WTC11 (cell line): ENCODE measurements at regions of chr7 and their contacts with region 1.

Region 1: DNA sequence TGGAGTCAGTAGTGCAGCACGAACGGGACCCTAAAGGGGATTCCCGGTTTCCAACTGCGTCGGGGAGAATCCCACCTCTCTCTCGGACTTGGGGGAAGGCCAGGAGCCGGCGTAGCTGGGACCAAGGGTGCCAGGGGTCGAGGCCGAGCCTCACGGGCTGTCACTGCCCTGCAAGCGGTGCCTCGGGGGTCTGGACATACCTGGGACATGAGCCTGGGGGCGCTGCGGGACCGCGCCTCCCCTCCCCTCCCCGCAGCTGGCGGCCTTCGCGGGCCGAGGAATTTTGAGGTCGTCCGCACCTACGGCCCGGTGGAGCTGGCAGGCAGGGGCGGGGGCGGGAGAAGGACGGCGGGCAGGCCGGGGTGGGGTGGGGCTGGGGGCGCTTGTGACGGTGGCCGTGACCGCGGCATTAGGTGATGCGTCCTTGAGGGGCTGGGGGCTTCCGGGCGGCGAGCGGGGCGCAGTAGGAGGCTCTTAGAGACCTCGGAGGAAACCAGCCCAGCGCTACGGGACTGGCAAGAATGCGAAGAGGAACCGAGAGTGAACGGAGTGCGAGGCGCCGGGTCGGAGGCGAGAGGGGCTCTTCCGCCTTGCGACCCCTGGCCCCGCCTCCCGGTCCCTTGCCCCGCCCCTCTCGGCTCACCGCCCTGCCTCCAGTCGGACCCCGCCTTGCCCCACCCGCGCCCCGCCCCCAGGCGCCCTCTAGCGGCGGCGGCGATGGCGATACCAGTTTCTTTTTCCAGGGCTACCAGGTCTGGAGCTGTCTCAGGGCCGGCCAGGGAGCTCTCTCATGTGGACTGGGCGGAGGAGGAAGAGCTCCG is 48.3 kb downstream of the NPVF start:
- DNase-seq: peak; percentile 99
- ATAC-seq: peak; percentile 96
- H3K4me3 Mint-ChIP-seq: peak overlapping the region; percentile 80
- H3K27ac Mint-ChIP-seq: no peak overlapping the region
- H3K4me1 Mint-ChIP-seq: peaks cover 24% of the 10 kb centered on the region
- H3K27me3 Mint-ChIP-seq: peaks cover 20% of the 10 kb centered on the region
- CTCF ChIP-seq: peak; percentile 80

Region 2: GRCh38 chr7:25125137-25125946 is 54.6 kb before region 1 on chr7 and contains the start of gene CYCS:
- CTCF ChIA-PET with region 1: interaction called, 13 read pairs
- POLR2A ChIA-PET with region 1: interaction called, 11 read pairs
- DNase-seq: peak; percentile 99
- ATAC-seq: peak; percentile 97
- H3K4me3 Mint-ChIP-seq: peak within 1 kb of the TSS; percentile 94
- H3K27ac Mint-ChIP-seq: peak within 1 kb of the TSS; percentile 99
- H3K4me1 Mint-ChIP-seq: peaks cover 10% of the 10 kb centered on the region
- H3K27me3 Mint-ChIP-seq: peaks cover 26% of the 10 kb centered on the region
- CTCF ChIP-seq: no peak
- total RNA-seq, gene CYCS: 215 to 249 TPM (median 217 TPM) in 3 replicates

Region 3: DNA sequence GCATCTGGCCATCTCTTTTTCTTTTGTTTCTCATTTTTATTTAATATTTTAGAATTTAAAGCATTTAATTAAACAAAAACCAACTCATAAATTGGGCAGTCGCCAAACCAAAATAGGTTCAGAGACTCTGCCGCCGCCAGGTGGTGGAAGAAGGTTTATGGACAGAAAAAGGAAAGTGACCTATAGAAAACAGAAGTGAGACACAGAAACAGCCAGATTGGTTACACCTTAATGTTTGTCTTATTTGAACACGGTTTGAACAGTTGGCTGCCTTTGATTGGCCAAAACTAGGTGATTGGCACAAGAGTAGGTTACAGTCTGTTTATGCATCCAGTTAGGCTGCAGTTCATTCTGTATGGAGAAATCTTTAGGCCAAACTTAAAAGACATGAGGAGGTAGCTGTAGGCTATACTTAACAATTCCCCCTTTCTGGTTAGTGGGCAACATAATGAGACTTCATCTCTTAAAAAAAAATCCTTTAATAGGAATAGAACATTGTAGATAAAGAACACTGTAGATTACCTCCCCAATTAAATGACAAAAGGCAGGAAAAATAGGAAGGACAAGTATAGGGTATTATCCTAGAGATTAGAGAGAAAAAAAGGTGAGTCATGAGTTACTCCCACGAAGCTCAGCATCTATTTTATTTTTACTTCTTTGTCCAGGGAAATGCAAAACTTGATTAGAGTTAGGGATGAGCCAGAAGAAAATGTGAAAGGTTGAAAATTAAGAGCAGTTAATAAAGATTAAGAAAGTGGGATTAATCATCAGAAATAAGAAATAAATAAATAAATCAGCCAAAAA is 31.0 kb before region 1 on chr7:
- CTCF ChIA-PET with region 1: interaction called, 12 read pairs
- POLR2A ChIA-PET with region 1: no interaction called
- DNase-seq: no peak
- ATAC-seq: no peak
- H3K4me3 Mint-ChIP-seq: no peak overlapping the region
- H3K27ac Mint-ChIP-seq: peak overlapping the region; percentile 15
- H3K4me1 Mint-ChIP-seq: peaks cover 18% of the 10 kb centered on the region
- H3K27me3 Mint-ChIP-seq: no peaks in the 10 kb centered on the region
- CTCF ChIP-seq: no peak

Region 4: GRCh38 chr7:25244254-25245033 is 64.5 kb after region 1 on chr7:
- CTCF ChIA-PET with region 1: interaction called, 12 read pairs
- POLR2A ChIA-PET with region 1: no interaction called
- DNase-seq: no peak
- ATAC-seq: peak; percentile 78
- H3K4me3 Mint-ChIP-seq: no peak overlapping the region
- H3K27ac Mint-ChIP-seq: no peak overlapping the region
- H3K4me1 Mint-ChIP-seq: peaks cover 11% of the 10 kb centered on the region
- H3K27me3 Mint-ChIP-seq: peaks cover 95% of the 10 kb centered on the region
- CTCF ChIP-seq: no peak

Region 5: DNA sequence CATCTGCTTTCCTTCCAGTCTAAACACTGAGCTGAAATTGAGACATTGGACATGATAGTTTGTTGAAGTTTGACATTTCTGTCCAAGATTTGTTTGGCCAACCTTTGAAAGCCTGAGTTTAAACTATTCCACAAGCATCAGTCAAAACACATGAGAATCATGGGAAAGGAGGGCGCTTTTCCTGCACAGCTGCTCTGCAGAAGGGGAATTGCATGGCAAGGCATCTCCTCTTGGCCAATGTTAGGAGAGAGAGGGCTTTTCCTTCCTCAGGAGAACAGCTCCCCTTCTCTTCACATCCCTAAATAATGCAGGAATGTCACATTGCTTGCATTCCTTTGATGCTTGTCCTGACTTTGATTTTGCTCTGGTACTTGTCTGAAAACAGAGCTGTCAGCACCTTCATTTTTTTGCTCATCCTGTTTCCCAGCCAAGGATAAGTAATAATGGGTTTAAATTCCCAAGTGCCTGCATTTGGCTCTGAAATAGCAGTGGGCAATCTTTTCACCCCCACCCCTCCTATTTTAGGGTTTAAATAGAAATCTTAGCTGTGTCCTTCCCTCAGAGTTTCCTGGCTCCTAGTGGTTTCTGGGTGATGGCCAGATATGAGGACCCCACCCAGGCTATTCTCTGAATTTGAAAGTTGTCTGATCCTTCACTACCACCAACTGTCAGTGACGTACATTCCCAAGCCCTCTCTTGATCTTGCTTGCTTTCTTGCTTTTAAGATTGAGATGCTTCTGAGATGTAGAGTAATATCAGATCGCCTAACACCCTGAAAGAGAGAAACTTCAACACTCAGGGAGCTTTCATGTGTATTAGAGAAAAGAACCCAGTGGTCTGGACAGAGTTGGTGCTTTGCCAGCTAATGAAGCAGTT is 123.5 kb after region 1 on chr7:
- CTCF ChIA-PET with region 1: interaction called, 12 read pairs
- POLR2A ChIA-PET with region 1: no interaction called
- DNase-seq: peak; percentile 29
- ATAC-seq: peak; percentile 98
- H3K4me3 Mint-ChIP-seq: no peak overlapping the region
- H3K27ac Mint-ChIP-seq: peak overlapping the region; percentile 96
- H3K4me1 Mint-ChIP-seq: peaks cover 35% of the 10 kb centered on the region
- H3K27me3 Mint-ChIP-seq: no peaks in the 10 kb centered on the region
- CTCF ChIP-seq: no peak